Activated CD4-positive, alpha-beta T cell treated with anti-CD3 and anti-CD28 coated beads, Interleukin-2, amount 10 ng/mL, durations not matched to agents 24 days and 14 days (primary cell): ENCODE measurements at regions of chr10 and their contacts with region 1.

Region 1: DNA sequence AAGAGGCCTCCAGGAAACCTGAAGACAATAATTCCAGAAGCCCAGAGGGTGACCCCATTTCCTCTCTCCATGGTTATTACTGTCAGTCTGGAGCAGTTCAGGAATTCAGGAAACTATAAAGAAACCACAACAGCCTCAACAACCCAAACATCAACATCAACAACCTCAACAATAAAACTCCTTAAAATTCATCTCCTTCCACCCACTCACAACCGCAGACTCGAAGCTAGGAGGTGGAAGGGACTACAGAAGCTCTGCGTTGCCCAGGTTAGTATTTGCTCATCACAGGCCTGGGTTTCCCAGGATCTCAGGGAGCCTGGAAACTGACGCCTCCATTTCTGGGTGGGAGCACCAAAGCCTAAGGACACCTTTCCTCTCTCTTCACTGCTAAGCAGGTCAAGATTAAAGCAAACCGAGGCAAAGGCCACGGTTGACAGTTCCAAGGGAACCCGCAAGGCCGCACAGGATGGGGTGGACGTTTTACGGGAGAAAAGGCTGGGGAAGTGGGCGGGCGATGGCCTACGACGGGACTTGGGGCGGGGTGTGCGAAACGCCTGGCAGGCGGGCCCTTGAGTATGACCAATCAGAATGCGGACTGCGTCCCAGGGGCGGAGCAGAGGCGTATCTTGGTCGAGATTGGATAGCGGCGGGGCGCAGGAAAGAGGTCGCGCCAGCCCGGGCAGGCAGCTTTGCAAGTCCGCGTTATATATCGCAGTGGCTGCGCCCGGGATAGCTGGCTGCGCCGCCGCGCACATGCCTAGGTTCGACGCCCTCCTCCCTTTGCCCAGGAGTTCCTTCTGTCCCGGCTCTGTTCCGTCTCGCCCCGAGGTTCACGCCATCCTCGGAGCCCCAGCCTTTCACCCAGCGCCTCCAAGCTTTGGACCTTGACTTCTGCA is at the start of gene ELOVL3:
- DNase-seq: peak; percentile 96
- H3K4me3 Mint-ChIP-seq: peak within 1 kb of the TSS; percentile 56
- H3K27ac Mint-ChIP-seq: peak within 1 kb of the TSS; percentile 38
- H3K4me1 Mint-ChIP-seq: peaks cover 17% of the 10 kb centered on the region
- H3K27me3 Mint-ChIP-seq: peaks cover 57% of the 10 kb centered on the region
- total RNA-seq, gene ELOVL3: 0.14 TPM in 1 of 2 replicates, not detected in the other

Region 2: DNA sequence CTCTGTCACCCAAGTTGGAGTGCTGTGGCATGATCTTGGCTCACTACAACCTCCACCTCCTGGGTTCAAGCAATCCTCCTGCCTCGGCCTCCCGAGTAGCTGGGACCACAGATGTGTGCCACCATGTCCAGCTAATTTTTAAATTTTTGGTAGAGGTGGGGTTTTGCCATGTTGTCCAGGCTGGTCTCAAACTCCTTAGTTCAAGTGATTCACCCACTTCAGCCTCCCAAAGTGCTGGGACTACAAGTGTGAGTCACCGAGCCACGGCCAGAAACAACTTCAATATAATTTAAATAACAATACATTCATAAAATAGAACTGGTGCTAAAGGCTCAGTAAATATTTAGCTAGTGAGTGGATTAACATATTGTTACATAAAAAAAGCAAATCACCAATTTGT is 94.2 kb before region 1 on chr10:
- intact Hi-C with region 1: no loop called
- DNase-seq: no peak
- H3K4me3 Mint-ChIP-seq: no peak overlapping the region
- H3K27ac Mint-ChIP-seq: no peak overlapping the region
- H3K4me1 Mint-ChIP-seq: peaks cover 29% of the 10 kb centered on the region
- H3K27me3 Mint-ChIP-seq: no peaks in the 10 kb centered on the region

Region 3: DNA sequence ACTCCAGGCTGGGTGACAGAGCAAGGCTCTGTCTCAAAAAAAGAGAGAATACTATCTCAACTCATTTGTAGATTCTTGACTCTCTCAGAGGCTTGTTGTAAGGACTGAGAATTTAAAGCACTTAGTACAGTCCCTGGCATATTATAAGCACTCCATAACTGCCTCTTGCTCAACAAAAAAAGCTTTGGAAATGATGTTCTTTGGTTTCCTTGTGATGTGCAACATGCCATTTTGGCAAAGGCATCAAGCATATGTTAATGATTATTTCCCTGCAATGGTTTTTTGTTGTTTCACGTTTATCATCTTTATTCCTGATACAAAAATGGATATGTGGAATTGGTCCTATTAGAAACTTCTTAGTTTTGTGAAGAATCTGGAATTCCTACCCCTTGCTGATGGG is 58.0 kb before region 1 on chr10:
- intact Hi-C with region 1: loop called (anchors 1 kb)
- DNase-seq: no peak
- H3K4me3 Mint-ChIP-seq: no peak overlapping the region
- H3K27ac Mint-ChIP-seq: no peak overlapping the region
- H3K4me1 Mint-ChIP-seq: peaks cover 8% of the 10 kb centered on the region
- H3K27me3 Mint-ChIP-seq: peaks cover 2% of the 10 kb centered on the region

Region 4: DNA sequence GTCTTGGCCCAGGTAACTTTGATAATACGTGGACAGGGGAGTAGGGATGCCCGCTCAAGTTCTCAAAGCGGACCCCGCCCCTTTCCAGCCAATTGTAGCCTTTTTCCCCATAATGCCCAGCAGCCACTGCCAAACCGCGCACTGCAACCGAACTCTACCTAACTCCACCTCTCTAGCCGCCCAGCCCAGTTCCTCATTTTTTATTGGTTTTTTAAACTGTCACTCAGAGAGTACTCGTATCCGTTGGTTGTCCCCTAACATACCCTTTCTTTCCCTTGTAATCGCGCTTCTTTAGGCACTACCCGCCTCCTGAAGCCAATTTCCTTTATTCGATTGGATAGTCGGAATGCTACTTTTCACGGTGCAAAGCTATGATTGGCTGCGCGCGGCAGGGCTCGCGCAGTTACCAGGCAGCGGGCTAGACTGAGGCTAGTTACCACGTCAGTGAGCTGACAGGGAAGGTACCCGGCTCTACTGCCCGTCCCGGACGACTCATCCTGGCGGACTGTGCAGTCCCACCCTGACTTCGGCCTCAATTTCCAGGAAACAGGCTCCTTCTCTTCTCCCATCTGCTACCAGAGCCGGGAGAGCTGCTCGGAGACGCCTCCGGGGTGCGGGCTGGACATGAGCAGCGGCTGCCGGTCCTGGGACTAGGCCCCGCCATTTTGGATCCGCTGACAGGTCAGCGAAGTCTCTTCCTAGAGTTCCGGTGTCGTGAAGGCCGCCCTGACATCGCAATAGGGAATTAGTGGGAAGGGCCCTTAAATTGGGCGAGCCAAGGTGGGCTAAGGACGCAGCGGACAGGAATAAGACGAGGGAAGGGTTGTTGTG is 19.4 kb after region 1 on chr10 and contains the start of gene GBF1:
- intact Hi-C with region 1: loop called (anchors 1 kb)
- DNase-seq: peak; percentile 97
- H3K4me3 Mint-ChIP-seq: peak within 1 kb of the TSS; percentile 100
- H3K27ac Mint-ChIP-seq: peak within 1 kb of the TSS; percentile 94
- H3K4me1 Mint-ChIP-seq: peaks cover 40% of the 10 kb centered on the region
- H3K27me3 Mint-ChIP-seq: peaks cover 14% of the 10 kb centered on the region
- total RNA-seq, gene GBF1: 45.2 and 47.7 TPM in 2 replicates

Region 5: GRCh38 chr10:102352066-102352715 is 126.3 kb after region 1 on chr10:
- intact Hi-C with region 1: loop called (anchors 1 kb)
- DNase-seq: peak; percentile 90
- H3K4me3 Mint-ChIP-seq: no peak overlapping the region
- H3K27ac Mint-ChIP-seq: no peak overlapping the region
- H3K4me1 Mint-ChIP-seq: peaks cover 8% of the 10 kb centered on the region
- H3K27me3 Mint-ChIP-seq: no peaks in the 10 kb centered on the region

Region 6: DNA sequence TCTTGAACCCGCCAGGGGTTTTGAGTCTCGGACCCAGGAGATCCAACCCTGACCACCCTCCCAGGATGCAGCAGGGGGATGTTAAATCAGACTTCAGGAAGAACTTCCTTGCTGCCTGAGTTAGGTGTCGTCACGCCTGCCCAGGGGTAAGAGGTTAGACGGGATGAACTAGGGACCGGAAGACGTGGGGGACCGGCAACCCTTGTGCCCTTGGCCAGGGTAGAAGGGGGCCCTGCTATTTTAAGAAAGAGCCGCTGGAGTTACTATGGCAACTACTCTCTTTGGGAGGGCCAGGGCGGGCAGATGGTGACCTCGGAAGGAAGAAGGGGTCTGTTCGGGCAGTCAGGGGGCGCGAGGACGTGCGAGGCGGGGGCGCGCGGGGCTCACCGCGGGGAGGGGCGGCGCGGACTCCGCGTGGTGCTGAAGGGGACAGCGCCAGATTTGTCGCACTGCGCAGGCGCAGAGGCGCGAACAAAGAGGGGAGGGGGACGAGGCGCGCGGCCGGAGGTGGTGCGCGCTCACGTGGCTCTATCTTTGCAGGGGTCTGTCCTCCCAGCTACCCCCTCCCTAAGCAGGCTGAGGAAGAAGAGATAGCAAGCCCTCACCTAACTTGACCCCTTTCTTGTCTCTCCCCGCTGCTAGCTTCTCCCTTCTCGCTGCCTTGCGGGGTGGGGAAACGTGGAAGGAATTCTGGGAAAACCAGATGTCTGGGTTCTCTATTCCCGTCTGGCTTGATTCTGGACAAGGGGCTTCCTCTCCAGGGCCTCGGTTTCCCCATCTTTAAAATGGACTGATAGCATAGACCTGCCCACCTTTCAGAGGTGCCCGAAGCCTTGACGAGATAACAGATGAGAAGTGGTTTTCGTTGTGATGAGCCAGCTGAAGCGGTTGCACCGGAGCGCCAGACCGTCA is 193.6 kb after region 1 on chr10:
- intact Hi-C with region 1: no loop called
- DNase-seq: peak; percentile 96
- H3K4me3 Mint-ChIP-seq: peak overlapping the region; percentile 96
- H3K27ac Mint-ChIP-seq: peak overlapping the region; percentile 95
- H3K4me1 Mint-ChIP-seq: peaks cover 26% of the 10 kb centered on the region
- H3K27me3 Mint-ChIP-seq: peaks cover 21% of the 10 kb centered on the region

Region 7: GRCh38 chr10:102476466-102477141 is 250.7 kb after region 1 on chr10:
- intact Hi-C with region 1: loop called (anchors 1 kb)
- DNase-seq: no peak
- H3K4me3 Mint-ChIP-seq: no peak overlapping the region
- H3K27ac Mint-ChIP-seq: peak overlapping the region; percentile 70
- H3K4me1 Mint-ChIP-seq: peaks cover 22% of the 10 kb centered on the region
- H3K27me3 Mint-ChIP-seq: no peaks in the 10 kb centered on the region

Region 8: DNA sequence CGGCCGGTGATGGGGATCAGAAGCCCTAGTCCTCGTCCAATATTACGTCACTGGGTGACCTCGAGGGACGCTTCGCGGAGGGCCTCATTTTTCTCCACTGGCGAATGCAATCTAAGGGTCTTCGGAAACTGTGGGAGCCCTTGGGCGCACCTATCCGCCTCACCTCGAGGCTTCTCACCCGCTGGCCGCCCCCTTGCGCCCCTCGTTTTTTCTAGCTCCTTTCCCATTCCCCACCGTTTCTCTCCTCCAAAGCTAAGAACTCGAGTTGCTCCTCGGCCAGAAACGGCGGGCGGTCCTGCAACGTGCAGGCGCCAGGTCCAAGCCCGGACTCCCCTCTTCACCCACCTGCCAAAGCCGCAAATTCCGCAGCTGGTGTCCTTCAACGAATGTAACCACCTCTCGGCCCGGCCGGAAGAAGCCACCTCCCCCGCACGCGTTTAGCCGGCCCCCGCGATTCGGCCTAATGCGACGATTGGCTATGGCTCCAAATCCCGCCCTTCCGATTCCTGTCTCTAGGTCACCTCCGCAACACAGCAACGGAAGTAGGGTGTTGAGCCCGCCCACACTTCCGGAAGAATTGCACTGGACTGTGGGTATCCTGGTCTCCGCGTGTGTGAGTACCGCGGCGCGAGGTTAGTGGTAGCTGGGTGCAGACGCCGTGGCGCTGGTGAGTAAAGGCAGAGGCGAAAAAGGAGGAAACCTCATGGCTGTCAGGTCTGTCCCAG is 1170.3 kb after region 1 on chr10 and contains the starts of genes ATP5MK and PDCD11:
- intact Hi-C with region 1: no loop called
- DNase-seq: peak; percentile 99
- H3K4me3 Mint-ChIP-seq: peak within 1 kb of the TSS; percentile 87
- H3K27ac Mint-ChIP-seq: peak within 1 kb of the TSS; percentile 81
- H3K4me1 Mint-ChIP-seq: peaks cover 41% of the 10 kb centered on the region
- H3K27me3 Mint-ChIP-seq: no peaks in the 10 kb centered on the region
- total RNA-seq, gene ATP5MK: 477 and 504 TPM in 2 replicates
- total RNA-seq, gene PDCD11: 103 and 105 TPM in 2 replicates